ENCODE measurements at regions of chr1 and their contacts with region 1.

Region 1: GRCh38 chr1:44594871-44595746 is 79.2 kb downstream of the TMEM53 start:
- DNase-seq: no peak
- H3K4me3 ChIP-seq: no peak overlapping the region
- CTCF ChIP-seq: peak; percentile 99

Region 2: GRCh38 chr1:44318097-44319088 is 276.7 kb before region 1 on chr1:
- CTCF ChIA-PET with region 1: interaction called, 15 read pairs
- POLR2A ChIA-PET with region 1: no interaction called
- DNase-seq: no peak
- H3K4me3 ChIP-seq: no peak overlapping the region
- CTCF ChIP-seq: peak; percentile 45

Region 3: DNA sequence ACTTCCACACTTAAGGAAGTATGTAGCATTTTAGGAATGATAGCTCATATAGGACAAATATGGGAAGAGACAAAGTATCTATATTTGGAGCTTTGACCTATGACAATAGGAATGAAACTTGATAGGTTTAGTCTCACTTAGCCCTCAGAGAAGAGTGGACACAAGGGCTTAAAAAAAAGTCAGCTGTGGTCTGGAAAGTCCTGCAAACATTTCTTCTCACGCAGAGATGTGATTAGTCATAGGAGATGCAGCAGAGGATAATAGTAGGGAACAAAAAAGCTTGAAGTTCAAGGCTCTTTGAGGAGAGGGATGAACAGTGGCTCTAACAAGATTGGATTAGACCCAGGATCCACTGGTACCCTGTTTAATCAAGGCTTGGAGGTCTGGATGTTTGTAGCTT is 204.8 kb before region 1 on chr1:
- CTCF ChIA-PET with region 1: interaction called, 18 read pairs
- POLR2A ChIA-PET with region 1: no interaction called
- DNase-seq: peak; percentile 59
- H3K4me3 ChIP-seq: no peak overlapping the region
- CTCF ChIP-seq: no peak

Region 4: DNA sequence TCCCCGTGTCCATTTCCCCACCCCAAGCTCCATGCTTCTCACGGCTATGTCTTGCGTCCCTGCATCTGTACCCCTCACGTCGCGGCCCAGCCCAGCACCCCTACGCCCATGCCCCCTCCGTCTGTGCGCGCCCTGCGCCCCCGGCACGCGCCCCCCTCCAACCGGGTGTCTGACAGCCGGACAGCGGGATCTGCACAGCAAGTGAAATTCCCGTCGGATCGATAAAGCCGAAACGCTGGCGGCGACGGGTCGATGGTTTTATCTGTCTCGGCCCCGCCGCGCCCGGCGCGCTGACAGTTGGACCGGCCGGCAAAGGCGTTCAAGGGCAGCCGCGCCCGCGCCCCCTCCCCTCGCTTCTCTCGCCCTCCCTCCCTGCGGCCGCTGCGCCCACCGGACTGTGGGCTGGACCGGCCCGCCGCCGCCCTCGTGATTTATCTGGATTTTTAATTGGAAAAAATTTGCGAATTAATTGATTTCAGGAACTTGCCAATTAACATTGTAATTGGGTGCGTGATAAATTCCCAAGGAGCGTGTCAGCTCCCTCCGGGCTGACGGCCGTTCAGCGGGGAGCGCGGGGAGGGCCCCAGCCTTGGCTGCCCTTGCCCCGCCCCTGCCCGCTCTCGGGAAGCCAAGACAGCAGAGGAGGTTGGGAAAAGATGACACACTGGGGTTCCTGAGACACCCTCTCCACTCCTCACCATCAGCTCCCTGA is 22.0 kb after region 1 on chr1:
- CTCF ChIA-PET with region 1: interaction called, 48 read pairs
- POLR2A ChIA-PET with region 1: no interaction called
- DNase-seq: no peak
- H3K4me3 ChIP-seq: peak overlapping the region; percentile 48
- CTCF ChIP-seq: no peak

Region 5: DNA sequence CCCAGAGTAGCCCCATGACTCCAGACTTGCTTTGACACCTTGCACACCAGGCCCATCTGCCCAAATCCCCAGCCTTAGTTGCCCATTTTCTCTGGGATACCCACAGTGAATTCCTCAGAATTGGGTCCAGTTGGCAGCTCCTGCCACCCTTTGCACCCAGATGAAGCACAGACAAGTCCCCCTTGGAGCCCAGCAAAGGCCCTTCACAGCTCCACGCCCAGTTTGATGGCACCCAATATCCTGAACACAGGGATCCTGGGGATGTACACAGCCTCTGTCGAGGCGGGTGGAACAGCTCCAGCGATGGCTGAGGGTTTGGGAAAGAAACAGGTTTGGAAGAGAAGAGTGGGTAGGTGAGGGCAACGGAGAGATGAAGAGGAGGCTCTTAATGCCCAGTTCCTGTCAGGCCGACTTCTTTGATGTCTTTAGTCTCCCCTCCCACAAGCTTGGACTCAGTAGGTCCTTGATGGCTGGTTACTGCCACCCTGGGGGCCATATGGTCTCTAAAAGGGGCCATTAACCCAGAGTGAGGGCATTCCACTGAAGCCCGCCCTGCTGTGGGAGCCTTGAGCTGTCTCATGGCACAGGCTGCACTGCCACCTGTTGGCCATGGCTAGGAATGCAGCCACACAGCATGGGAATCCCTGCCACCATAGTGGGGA is 57.5 kb after region 1 on chr1:
- CTCF ChIA-PET with region 1: interaction called, 462 read pairs
- POLR2A ChIA-PET with region 1: interaction called, 3 read pairs
- DNase-seq: no peak
- H3K4me3 ChIP-seq: no peak overlapping the region
- CTCF ChIP-seq: peak; percentile 98